ENCODE measurements at regions of chr2 and their contacts with region 1.

Region 1: GRCh38 chr2:64538764-64539433 is 14.8 kb downstream of the AFTPH start:
- DNase-seq: no peak
- H3K4me3 ChIP-seq: no peak overlapping the region
- H3K27ac ChIP-seq: no peak overlapping the region
- H3K4me1 ChIP-seq: peaks cover 0 to 5% of the 10 kb centered on the region in 2 donors
- H3K27me3 ChIP-seq: no peaks in the 10 kb centered on the region
- CTCF ChIP-seq: no peak
- POLR2A ChIP-seq: no peak

Region 2: GRCh38 chr2:64133828-64134227 is 405.1 kb before region 1 on chr2:
- intact Hi-C with region 1: no loop called
- DNase-seq: no peak
- H3K4me3 ChIP-seq: no peak overlapping the region
- H3K27ac ChIP-seq: peak overlapping the region; percentile 43 to 67
- H3K4me1 ChIP-seq: peaks cover 3 to 13% of the 10 kb centered on the region in 2 donors
- H3K27me3 ChIP-seq: no peaks in the 10 kb centered on the region
- CTCF ChIP-seq: no peak
- POLR2A ChIP-seq: no peak

Region 3: DNA sequence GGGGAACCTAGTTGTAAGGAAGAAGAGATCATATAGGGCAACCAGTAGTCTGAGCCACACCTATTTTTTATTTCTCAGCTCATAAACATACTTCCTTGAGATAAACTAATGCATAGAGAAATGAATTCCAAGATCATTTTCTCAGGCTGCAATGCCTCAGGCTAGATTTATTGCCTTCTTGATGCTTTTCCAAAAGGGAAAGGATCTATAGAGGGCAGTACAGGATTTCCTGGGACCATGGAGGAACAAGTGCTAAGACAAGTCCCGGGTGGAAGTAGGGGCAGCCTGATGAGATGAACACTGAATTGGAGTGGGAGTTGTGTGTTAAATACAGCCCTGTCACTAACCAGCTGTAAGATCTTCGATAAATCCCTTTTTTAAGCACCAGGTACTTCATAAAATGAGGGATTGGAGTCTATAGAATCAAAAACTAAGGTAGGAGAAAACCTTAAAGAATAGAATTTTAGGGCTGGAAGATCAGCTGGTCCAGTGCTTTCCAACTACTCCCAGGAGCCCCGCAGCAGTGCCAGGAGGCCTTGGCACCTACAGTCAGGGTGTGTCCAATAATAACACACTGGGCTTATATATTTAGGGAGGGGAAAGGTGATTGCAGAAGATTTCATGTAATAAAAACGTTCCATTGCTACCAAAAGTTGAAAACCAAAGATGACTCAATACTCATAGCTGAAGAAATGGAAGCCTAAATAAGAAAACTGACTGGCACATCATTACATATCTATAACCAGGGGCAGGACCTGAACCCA is 56.7 kb after region 1 on chr2:
- intact Hi-C with region 1: loop called (anchors 2 kb)
- DNase-seq: no peak
- H3K4me3 ChIP-seq: no peak overlapping the region
- H3K27ac ChIP-seq: no peak overlapping the region
- H3K4me1 ChIP-seq: peaks cover 5 to 6% of the 10 kb centered on the region in 2 donors
- H3K27me3 ChIP-seq: no peaks in the 10 kb centered on the region
- CTCF ChIP-seq: no peak
- POLR2A ChIP-seq: no peak

Measured in breast epithelium (tissue), 4 donors.